SK-N-SH (cell line): ENCODE measurements at regions of chr10 and their contacts with region 1.

Region 1: DNA sequence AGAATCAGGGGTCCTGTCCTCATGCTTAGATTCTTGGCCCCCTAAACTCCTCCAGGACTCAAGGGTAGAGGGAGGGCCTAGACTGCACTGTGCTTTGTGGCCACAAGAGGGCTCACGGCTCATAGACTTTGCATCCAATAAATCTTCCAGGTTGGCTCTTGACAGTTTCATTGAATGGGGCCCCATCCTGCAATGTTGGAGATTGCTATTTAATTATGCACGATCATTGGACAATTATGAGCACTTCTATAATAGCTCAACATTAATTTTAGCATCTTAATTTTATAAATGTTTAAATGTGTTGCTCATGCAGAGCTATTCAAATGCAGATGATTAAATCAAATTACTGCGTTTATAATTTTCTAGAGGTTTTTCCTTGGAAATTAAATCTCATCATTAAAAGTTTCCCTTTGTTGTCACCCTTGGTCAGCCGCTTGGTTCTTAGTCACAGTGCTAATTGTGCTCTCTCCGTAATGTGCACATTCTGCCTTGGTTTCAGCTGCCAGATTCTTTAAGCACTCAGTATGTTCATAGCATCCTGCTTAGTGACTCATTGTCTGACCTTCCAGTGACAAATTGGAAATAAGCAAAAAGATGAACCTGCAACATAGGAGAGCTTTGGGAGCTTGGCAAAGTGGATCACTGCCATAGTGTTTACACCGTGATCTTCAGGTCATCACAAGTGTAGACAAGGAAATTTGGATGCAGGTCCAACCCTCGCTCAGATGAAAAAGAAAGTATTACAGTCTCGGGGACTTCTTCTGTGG is 33.4 kb upstream of the PLPP4 start:
- DNase-seq: peak; percentile 67
- H3K4me3 ChIP-seq: peak overlapping the region; percentile 25 to 43; a peak in 3 of 4 replicates
- H3K27ac ChIP-seq: peak overlapping the region; percentile 60 to 97; a peak in 3 of 4 replicates
- H3K4me1 ChIP-seq: peaks cover 8 to 26% of the 10 kb centered on the region in 2 experiments
- H3K27me3 ChIP-seq: no peaks in the 10 kb centered on the region
- CTCF ChIP-seq: peak; percentile 99
- EP300 ChIP-seq: peak in 1 of 2 experiments; percentile 56; a peak in 2 of 4 replicates
- RAD21 ChIP-seq: peak; percentile 88

Region 2: DNA sequence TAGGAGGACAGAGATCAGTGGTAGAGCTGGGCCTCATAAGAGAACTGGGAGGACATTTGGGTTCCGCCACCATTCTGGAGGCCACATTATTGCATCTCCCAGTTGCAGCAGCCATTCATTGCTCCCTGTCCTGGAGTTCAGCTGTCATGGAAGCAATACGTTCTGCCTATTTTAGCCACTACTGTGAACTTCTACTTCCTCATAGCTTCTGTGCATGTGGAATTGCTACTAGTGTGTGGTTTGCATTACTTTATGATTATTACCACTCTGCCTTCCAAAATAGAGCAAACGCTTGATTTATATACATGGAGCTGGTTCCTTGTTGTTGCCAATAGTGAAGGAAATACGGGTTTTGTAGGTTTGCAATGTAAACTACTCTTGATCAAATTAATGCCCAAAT is 13.8 kb before region 1 on chr10:
- CTCF ChIA-PET with region 1: interaction called, 22 read pairs
- POLR2A ChIA-PET with region 1: no interaction called
- DNase-seq: no peak
- H3K4me3 ChIP-seq: no peak overlapping the region
- H3K27ac ChIP-seq: no peak overlapping the region
- H3K4me1 ChIP-seq: peaks cover 0 to 3% of the 10 kb centered on the region in 2 experiments; a peak in 1 of 4 replicates
- H3K27me3 ChIP-seq: no peaks in the 10 kb centered on the region
- CTCF ChIP-seq: no peak
- EP300 ChIP-seq: no peak
- RAD21 ChIP-seq: no peak

Region 3: DNA sequence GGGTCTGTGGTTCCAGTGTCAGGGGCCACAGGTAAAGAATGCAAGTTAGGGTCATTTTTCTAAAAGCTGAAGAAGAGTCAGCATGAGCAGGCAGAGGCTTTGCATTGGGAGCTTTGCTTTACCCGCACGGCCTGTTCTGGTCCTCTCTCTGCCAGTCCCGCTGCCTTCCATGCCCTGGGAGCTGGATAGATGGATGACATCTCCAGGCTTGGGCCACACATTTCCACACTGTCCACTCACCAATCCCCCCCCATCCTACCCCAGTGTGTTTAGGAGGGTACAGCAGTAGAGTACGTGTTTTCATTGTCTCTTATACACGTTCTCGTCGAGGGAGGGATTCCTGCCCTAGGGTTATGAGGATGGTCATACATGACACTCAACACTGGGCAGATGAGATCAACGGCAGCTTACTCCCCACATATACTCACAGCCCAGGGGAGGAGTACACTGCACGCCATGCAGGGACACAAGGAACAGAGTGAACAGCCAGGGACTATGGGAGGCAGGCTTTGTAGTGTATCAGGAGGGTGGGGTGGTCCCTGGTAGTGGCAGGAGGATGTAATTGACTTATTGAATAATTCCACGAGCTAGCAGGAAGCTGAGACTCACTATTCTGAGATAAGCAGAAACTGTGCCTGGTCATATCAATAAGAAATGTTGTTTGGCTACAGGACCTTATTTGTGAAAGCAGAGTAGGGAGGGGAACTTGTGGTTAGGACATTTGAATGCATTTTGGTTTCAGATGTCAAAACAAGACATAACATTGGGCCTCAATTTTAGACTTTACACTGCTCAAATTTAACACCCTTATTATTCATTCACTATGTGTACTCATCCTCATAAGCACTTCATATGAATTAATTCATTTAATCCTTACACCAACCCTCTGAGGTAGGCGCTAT is 70.0 kb after region 1 on chr10:
- CTCF ChIA-PET with region 1: interaction called, 12 read pairs
- POLR2A ChIA-PET with region 1: no interaction called
- DNase-seq: no peak
- H3K4me3 ChIP-seq: no peak overlapping the region
- H3K27ac ChIP-seq: no peak overlapping the region
- H3K4me1 ChIP-seq: peaks cover 0 to 9% of the 10 kb centered on the region in 2 experiments; a peak in 1 of 4 replicates
- H3K27me3 ChIP-seq: no peaks in the 10 kb centered on the region
- CTCF ChIP-seq: no peak
- EP300 ChIP-seq: no peak
- RAD21 ChIP-seq: no peak

Region 4: GRCh38 chr10:120600871-120601649 is 177.4 kb after region 1 on chr10:
- CTCF ChIA-PET with region 1: interaction called, 43 read pairs
- POLR2A ChIA-PET with region 1: no interaction called
- DNase-seq: peak; percentile 61
- H3K4me3 ChIP-seq: no peak overlapping the region
- H3K27ac ChIP-seq: 0 out of 4 replicates have a peak overlapping the region, but pooled peaks of 1 of the 2 experiments have one; percentile 15
- H3K4me1 ChIP-seq: peaks cover 8 to 29% of the 10 kb centered on the region in 2 experiments; a peak in 1 of 4 replicates
- H3K27me3 ChIP-seq: no peaks in the 10 kb centered on the region
- CTCF ChIP-seq: peak; percentile 67
- EP300 ChIP-seq: no peak
- RAD21 ChIP-seq: peak; percentile 75

Region 5: DNA sequence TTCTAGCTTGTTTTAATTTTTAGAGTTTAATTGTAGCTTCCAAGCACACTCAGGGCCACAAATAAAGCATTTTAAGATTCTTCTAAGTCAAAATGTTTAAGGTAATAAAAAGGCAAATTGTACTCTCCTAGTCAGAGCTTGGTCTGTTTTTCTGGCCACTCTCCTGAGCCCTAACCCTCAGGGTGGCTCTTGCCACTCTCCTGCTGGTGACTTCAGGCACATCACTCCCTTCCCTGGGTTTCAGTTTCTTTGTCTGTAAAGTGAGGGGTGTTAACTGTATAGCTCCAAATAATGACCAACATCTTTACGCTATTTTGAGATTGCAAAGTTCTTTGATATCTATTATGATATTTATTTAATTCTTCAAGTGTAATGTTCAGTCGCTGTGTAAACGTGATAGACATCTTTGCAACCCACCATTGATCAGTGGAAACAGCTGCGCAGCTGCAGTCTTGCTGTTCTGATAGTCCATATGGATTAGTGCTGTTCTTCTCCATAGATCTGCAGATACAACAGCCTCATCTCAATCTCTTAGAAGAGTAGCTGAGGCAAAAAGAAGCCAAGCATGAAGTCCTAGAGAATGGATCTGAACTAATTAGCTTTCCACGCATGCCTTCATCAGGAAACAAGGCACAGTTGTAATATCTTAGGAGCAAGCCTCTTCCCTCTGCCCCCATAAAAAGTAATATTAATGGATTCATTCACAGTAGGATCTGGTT is 223.3 kb after region 1 on chr10:
- CTCF ChIA-PET with region 1: interaction called, 26 read pairs
- POLR2A ChIA-PET with region 1: no interaction called
- DNase-seq: peak; percentile 70
- H3K4me3 ChIP-seq: no peak overlapping the region
- H3K27ac ChIP-seq: peak overlapping the region in 1 of 2 experiments; percentile 69; a peak in 1 of 4 replicates
- H3K4me1 ChIP-seq: peaks cover 0 to 12% of the 10 kb centered on the region in 2 experiments; a peak in 1 of 4 replicates
- H3K27me3 ChIP-seq: no peaks in the 10 kb centered on the region
- CTCF ChIP-seq: no peak
- EP300 ChIP-seq: no peak; a peak in 1 of 4 replicates
- RAD21 ChIP-seq: peak; percentile 61

Region 6: DNA sequence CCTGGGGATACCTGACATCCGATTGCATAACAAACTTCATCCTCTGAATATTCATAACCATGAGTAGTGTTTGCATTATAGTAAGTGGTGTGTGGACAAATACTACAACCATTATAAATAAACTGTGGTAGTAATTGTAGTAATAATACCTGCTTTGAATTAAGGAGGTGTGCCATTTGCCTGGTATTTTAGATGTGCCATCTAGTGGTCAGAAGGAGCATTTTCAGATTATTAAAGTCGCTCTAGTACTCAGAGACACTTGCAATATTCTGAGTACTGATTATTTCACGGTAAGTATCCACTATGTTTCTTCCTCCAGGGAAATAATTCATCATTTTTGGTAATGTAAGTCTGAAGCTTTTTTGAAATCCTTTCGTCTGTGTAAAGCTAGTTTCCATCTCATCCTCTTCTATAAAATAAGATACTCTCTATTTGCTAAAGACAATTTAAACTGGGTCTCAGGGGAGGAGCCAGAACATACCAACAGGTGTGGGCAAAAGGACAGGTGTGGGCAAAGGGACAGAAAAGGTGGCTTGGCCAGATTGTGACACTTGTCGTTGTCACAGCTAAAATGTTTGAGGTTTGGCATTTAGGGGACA is 312.3 kb after region 1 on chr10:
- CTCF ChIA-PET with region 1: interaction called, 45 read pairs
- POLR2A ChIA-PET with region 1: no interaction called
- DNase-seq: peak; percentile 22
- H3K4me3 ChIP-seq: no peak overlapping the region; a peak in 1 of 4 replicates
- H3K27ac ChIP-seq: no peak overlapping the region
- H3K4me1 ChIP-seq: no peaks in the 10 kb centered on the region
- H3K27me3 ChIP-seq: no peaks in the 10 kb centered on the region
- CTCF ChIP-seq: peak; percentile 83
- EP300 ChIP-seq: no peak
- RAD21 ChIP-seq: peak; percentile 69